ENCODE measurements at regions of chr3 and their contacts with region 1.

Region 1: GRCh38 chr3:73086071-73086494 is 24.6 kb downstream of the EBLN2 start:
- DNase-seq: peak; percentile 21 to 35
- ATAC-seq: peak in 7 of 8 donors; percentile 41 to 72 (median 66)
- H3K4me3 ChIP-seq: no peak overlapping the region
- H3K27ac ChIP-seq: no peak overlapping the region
- H3K4me1 ChIP-seq: peaks cover 0 to 8% (median 0%) of the 10 kb centered on the region in 9 donors
- H3K27me3 ChIP-seq: no peaks in the 10 kb centered on the region
- CTCF ChIP-seq: peak; percentile 64 to 88 (median 84)

Region 2: GRCh38 chr3:71710906-71711494 is 1375.1 kb before region 1 on chr3:
- intact Hi-C with region 1: loop called in 2 of 10 experiments (anchors 10 kb)
- DNase-seq: no peak
- ATAC-seq: peak in 6 of 8 donors; percentile 43 to 70 (median 60)
- H3K4me3 ChIP-seq: no peak overlapping the region
- H3K27ac ChIP-seq: no peak overlapping the region
- H3K4me1 ChIP-seq: peaks cover 0 to 42% (median 4%) of the 10 kb centered on the region in 9 donors
- H3K27me3 ChIP-seq: no peaks in the 10 kb centered on the region
- CTCF ChIP-seq: peak; percentile 30 to 74 (median 64)

Region 3: DNA sequence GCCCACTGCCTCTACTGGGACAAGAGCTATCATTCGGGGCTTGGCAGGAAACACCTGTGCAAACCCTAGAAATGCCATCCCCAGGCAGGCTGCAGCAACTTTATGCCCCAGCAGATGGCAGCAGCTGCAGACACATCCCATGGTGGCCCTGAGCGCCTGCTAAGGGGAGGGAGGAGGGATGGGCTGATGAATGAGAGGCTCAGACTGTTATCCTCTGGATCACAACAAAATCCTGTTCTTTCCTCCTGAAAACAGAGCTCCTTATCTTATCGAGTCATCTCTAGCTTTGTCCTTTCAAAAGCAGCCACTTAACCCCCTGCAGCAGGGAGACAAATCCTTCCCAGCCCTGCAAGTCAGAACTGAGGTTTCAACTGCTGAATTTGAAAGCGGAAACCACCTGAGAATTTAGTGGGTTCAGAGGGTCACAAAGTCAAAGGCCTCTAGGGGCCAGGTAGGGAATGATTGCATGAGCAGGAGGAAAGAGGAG is 1210.6 kb before region 1 on chr3:
- intact Hi-C with region 1: loop called in 2 of 10 experiments (anchors 2 to 10 kb)
- DNase-seq: peak; percentile 61 to 72
- ATAC-seq: peak; percentile 83 to 97 (median 90)
- H3K4me3 ChIP-seq: no peak overlapping the region
- H3K27ac ChIP-seq: no peak overlapping the region
- H3K4me1 ChIP-seq: peaks cover 0 to 8% (median 0%) of the 10 kb centered on the region in 9 donors
- H3K27me3 ChIP-seq: peaks cover 0 to 12% (median 2%) of the 10 kb centered on the region in 7 donors
- CTCF ChIP-seq: peak; percentile 67 to 94 (median 88)

Region 4: GRCh38 chr3:72855001-72855400 is 231.1 kb before region 1 on chr3:
- intact Hi-C with region 1: loop called in 7 of 10 experiments (anchors 5 to 10 kb)
- DNase-seq: no peak
- ATAC-seq: no peak
- H3K4me3 ChIP-seq: no peak overlapping the region
- H3K27ac ChIP-seq: no peak overlapping the region
- H3K4me1 ChIP-seq: no peaks in the 10 kb centered on the region
- H3K27me3 ChIP-seq: no peaks in the 10 kb centered on the region
- CTCF ChIP-seq: no peak

Region 5: GRCh38 chr3:72938471-72939265 is 147.4 kb before region 1 on chr3:
- intact Hi-C with region 1: loop called in 8 of 10 experiments (anchors 1 to 10 kb)
- DNase-seq: peak in 1 of 2 donors; percentile 69
- ATAC-seq: peak; percentile 84 to 96 (median 91)
- H3K4me3 ChIP-seq: no peak overlapping the region
- H3K27ac ChIP-seq: peak overlapping the region in 8 of 10 donors; percentile 2 to 61 (median 30)
- H3K4me1 ChIP-seq: peaks cover 0 to 27% (median 9%) of the 10 kb centered on the region in 9 donors
- H3K27me3 ChIP-seq: no peaks in the 10 kb centered on the region
- CTCF ChIP-seq: peak; percentile 34 to 77 (median 59)

Region 6: GRCh38 chr3:73234354-73235014 is 148.4 kb after region 1 on chr3:
- intact Hi-C with region 1: no loop called
- DNase-seq: no peak
- ATAC-seq: no peak
- H3K4me3 ChIP-seq: no peak overlapping the region
- H3K27ac ChIP-seq: no peak overlapping the region
- H3K4me1 ChIP-seq: peaks cover 0 to 4% (median 0%) of the 10 kb centered on the region in 9 donors
- H3K27me3 ChIP-seq: no peaks in the 10 kb centered on the region
- CTCF ChIP-seq: no peak